Activated CD4-positive, alpha-beta memory T cell treated with anti-CD3 and anti-CD28 coated beads for 36 hours (primary cell): ENCODE measurements at regions of chrX and their contacts with region 1.

Region 1: DNA sequence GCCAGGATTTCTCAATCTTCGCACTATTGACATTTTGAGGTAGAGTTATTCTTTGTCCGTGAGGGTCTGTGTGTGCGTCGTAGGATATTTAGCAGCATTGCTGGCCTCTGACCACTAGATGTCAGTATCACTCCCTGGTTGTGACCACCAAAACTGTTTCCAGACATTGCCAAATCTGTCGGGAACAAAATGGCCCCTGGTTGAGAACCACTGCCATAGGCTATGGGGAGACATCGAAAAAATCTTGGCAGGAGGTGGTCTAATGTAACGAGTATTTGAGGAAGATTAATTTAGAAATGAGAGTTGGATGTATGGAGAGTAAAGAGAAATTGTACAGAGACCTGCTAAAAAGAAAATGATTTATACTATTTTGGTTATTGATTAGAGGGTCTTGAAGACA is 108.4 kb downstream of the DOCK11 start:
- DNase-seq: peak; percentile 38
- H3K4me3 Mint-ChIP-seq: no peak overlapping the region
- H3K27ac Mint-ChIP-seq: no peak overlapping the region
- H3K4me1 Mint-ChIP-seq: peaks cover 23% of the 10 kb centered on the region
- H3K27me3 Mint-ChIP-seq: no peaks in the 10 kb centered on the region

Region 2: DNA sequence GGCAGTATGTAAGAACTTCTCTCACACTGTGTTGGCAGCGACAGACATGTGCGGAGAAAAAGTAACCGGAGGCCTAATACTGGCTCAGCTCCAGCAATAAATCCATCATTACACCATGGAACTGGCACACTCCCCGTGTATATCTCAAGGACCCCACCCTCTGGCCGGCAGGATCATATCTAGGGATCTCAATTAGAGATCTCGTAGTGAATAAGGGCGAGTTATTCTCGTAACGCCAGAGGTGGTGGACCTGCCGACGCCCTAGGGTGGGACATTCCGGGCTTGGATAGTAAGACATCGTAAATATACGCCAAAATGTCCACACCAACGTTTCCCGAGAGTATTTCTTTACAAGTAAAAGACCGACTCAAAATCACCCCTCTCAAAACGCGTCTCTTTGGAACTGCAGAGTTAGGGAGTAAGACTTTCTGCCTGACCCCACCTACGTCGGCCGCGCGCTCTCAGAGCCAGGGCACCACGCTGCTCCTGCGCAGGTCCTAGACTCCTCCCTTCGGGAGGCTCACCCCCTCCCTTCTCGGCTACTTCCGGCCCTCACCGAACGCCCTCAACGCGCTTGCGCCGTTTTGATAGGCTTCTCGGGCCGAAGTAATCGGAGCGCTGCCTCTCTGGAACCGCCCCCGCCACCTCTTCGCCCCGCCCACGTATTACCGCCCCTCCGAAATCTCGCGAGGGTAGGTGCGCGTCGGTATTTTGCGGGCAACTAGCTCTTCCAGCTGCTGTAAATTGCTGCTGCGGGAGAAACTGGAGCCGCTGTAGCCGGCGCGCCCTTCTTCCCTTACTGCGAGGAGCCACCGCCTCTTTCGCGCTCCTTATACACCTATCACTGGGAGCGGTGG is 258.4 kb before region 1 on chrX and contains the start of gene WDR44:
- CTCF ChIA-PET with region 1: interaction called, 3 read pairs
- POLR2A ChIA-PET with region 1: no interaction called
- intact Hi-C with region 1: loop called (anchors 5 kb)
- DNase-seq: peak; percentile 96
- H3K4me3 Mint-ChIP-seq: peak within 1 kb of the TSS; percentile 96
- H3K27ac Mint-ChIP-seq: peak within 1 kb of the TSS; percentile 98
- H3K4me1 Mint-ChIP-seq: peaks cover 32% of the 10 kb centered on the region
- H3K27me3 Mint-ChIP-seq: no peaks in the 10 kb centered on the region
- total RNA-seq, gene WDR44: 8.2 to 9.2 TPM

Region 3: GRCh38 chrX:118495061-118495921 is 108.7 kb before region 1 on chrX and contains the start of gene DOCK11:
- CTCF ChIA-PET with region 1: interaction called, 10 read pairs
- POLR2A ChIA-PET with region 1: no interaction called
- intact Hi-C with region 1: loop called (anchors 10 kb)
- DNase-seq: peak; percentile 90
- H3K4me3 Mint-ChIP-seq: peak within 1 kb of the TSS; percentile 99
- H3K27ac Mint-ChIP-seq: peak within 1 kb of the TSS; percentile 97
- H3K4me1 Mint-ChIP-seq: peaks cover 24% of the 10 kb centered on the region
- H3K27me3 Mint-ChIP-seq: no peaks in the 10 kb centered on the region
- total RNA-seq, gene DOCK11: 47.5 to 50.4 TPM

Region 4: DNA sequence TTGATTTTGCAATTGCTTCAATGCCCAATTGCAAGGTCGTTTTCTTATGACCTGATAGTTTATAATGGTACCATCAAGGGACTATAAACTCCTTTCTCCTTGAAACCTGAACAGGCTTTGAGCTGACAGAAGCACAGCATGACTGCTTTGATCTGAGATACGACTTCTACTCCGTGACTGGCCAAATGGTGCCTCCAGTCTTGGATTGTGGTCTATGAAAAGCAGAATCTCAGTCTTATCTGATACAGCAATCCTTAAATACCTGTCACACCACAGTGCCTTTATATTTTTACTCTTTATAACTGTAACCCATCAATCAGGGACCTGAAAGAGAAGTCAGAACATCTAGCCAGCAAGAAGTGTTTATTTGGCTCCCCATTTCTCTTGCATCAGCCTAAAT is 15.3 kb before region 1 on chrX:
- CTCF ChIA-PET with region 1: interaction called, 12 read pairs
- POLR2A ChIA-PET with region 1: no interaction called
- intact Hi-C with region 1: no loop called
- DNase-seq: no peak
- H3K4me3 Mint-ChIP-seq: no peak overlapping the region
- H3K27ac Mint-ChIP-seq: peak overlapping the region; percentile 43
- H3K4me1 Mint-ChIP-seq: peaks cover 18% of the 10 kb centered on the region
- H3K27me3 Mint-ChIP-seq: no peaks in the 10 kb centered on the region

Region 5: GRCh38 chrX:118682258-118683014 is 78.5 kb after region 1 on chrX:
- CTCF ChIA-PET with region 1: no interaction called
- POLR2A ChIA-PET with region 1: no interaction called
- intact Hi-C with region 1: no loop called
- DNase-seq: no peak
- H3K4me3 Mint-ChIP-seq: no peak overlapping the region
- H3K27ac Mint-ChIP-seq: no peak overlapping the region
- H3K4me1 Mint-ChIP-seq: no peaks in the 10 kb centered on the region
- H3K27me3 Mint-ChIP-seq: no peaks in the 10 kb centered on the region

Region 6: DNA sequence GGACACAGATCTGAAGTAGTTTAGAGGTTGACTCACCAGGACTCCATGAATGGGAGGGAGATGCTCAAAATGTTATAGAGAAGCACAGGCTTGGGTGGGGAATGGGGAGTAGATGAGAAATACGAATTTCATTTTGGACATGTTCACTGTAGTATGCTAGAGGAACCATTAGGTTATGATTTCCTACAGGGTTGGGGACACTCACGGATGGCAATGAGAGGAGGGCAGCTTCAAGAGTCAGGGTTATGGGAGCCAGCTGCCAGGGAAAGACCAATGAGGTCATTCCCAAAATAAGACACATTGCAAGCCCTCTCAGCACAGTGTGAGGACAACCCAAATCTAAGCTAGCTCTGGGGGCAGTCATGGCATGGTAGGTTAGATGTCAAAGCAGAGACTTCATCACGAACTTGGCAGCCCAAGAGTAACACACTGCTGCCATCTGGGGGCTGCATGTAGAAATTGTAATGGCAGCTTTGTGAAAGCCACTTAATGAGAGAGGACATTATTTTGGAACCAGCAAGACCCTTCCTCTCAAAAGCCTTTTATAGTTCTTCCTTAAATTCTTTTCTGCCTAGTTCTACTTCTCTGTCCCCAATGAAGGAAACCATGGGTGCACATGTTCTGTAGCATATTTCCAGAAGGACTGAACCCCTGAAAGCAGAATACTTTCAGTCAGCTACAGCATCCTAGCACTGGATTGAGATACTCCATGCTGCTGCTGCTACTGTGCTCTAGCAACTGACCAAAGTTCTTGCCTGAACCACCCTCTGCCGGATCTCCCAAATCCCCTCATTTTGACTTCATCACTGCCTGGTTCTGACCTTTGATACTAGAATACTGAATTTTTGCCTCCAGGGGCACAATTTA is 203.4 kb after region 1 on chrX:
- CTCF ChIA-PET with region 1: interaction called, 11 read pairs
- POLR2A ChIA-PET with region 1: no interaction called
- intact Hi-C with region 1: loop called (anchors 1 kb)
- DNase-seq: peak; percentile 54
- H3K4me3 Mint-ChIP-seq: no peak overlapping the region
- H3K27ac Mint-ChIP-seq: no peak overlapping the region
- H3K4me1 Mint-ChIP-seq: no peaks in the 10 kb centered on the region
- H3K27me3 Mint-ChIP-seq: peaks cover 4% of the 10 kb centered on the region

Region 7: GRCh38 chrX:118948270-118948669 is 344.3 kb after region 1 on chrX:
- CTCF ChIA-PET with region 1: no interaction called
- POLR2A ChIA-PET with region 1: no interaction called
- intact Hi-C with region 1: no loop called
- DNase-seq: no peak
- H3K4me3 Mint-ChIP-seq: no peak overlapping the region
- H3K27ac Mint-ChIP-seq: no peak overlapping the region
- H3K4me1 Mint-ChIP-seq: no peaks in the 10 kb centered on the region
- H3K27me3 Mint-ChIP-seq: no peaks in the 10 kb centered on the region